ENCODE measurements at regions of chr14 and their contacts with region 1.

Region 1: GRCh38 chr14:102993529-102993928 is 63.8 kb downstream of the CDC42BPB start:
- DNase-seq: peak; percentile 49
- H3K4me3 ChIP-seq: no peak overlapping the region
- H3K27ac ChIP-seq: no peak overlapping the region
- H3K4me1 ChIP-seq: peaks cover 12% of the 10 kb centered on the region
- H3K27me3 ChIP-seq: no peaks in the 10 kb centered on the region
- CTCF ChIP-seq: no peak
- POLR2A ChIP-seq: no peak

Region 2: GRCh38 chr14:102849526-102850379 is 143.8 kb before region 1 on chr14:
- CTCF ChIA-PET with region 1: no interaction called
- POLR2A ChIA-PET with region 1: no interaction called
- dilution Hi-C with region 1: no loop called
- intact Hi-C with region 1: no loop called
- DNase-seq: peak; percentile 71
- H3K4me3 ChIP-seq: no peak overlapping the region
- H3K27ac ChIP-seq: no peak overlapping the region
- H3K4me1 ChIP-seq: peaks cover 10% of the 10 kb centered on the region
- H3K27me3 ChIP-seq: no peaks in the 10 kb centered on the region
- CTCF ChIP-seq: no peak
- POLR2A ChIP-seq: no peak

Region 3: GRCh38 chr14:103007555-103007954 is 14.0 kb after region 1 on chr14:
- CTCF ChIA-PET with region 1: interaction called, 4 read pairs
- POLR2A ChIA-PET with region 1: no interaction called
- dilution Hi-C with region 1: no loop called
- intact Hi-C with region 1: loop called (anchors 2 kb)
- DNase-seq: peak; percentile 81
- H3K4me3 ChIP-seq: no peak overlapping the region
- H3K27ac ChIP-seq: peak overlapping the region; percentile 68
- H3K4me1 ChIP-seq: peaks cover 40% of the 10 kb centered on the region
- H3K27me3 ChIP-seq: no peaks in the 10 kb centered on the region
- CTCF ChIP-seq: no peak
- POLR2A ChIP-seq: no peak

Measured in endothelial cell of umbilical vein (primary cell).